Aorta (tissue), 5 donors: ENCODE measurements at regions of chr19 and their contacts with region 1.

Region 1: DNA sequence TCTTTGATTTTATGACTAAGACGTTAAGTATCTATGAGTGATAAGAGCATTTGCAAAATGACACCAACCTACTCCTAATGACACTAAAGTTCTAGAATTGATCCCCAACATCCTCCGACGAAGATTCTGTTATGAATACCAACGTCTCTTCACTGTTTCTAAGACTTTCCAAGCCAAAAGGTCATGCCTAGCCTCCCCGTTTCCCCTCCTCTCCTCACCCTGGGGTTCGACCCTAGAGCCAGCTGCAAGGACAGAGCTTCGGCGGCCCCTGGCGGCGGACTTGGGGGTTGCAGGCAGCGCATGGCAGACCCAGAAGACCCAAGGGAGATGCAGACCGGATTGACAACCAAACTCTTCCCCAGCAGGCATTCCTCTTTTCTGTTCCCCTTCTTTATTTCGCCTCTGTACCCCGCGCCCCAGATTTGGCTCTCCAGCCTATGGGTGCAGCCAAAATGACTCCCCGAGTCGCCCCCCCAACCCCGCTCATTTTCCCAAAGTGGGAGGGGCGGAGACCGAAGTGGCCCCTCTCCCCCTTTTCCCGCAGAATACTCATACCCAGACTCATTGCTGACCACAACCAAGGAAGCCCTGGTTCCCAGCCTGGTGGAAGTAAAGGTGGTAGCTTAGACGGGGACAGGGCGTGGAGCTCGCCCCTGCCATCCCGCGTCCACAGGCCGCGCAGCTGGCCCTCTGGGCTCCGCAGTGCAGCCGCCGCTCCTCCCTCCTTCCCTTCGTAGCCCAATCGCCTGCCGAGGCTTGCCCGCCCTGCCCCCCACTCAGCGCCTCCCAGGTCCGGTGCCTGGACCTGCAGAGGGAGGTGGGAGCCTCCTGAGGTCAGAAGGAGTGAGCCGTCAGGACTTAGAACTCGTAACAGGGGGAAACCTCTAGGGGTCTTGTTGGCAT is 4.1 kb upstream of the EML2 start:
- DNase-seq: peak; percentile 90 to 93
- ATAC-seq: peak; percentile 82
- H3K4me3 ChIP-seq: no peak overlapping the region
- H3K27ac ChIP-seq: no peak overlapping the region
- H3K4me1 ChIP-seq: peaks cover 0 to under 1% of the 10 kb centered on the region in 2 donors
- H3K27me3 ChIP-seq: no peaks in the 10 kb centered on the region

Region 2: GRCh38 chr19:45506246-45506990 is 136.9 kb before region 1 on chr19:
- intact Hi-C with region 1: loop called in 1 of 2 experiments (anchors 5 kb)
- DNase-seq: peak; percentile 97 to 99
- ATAC-seq: peak; percentile 90
- H3K4me3 ChIP-seq: peak overlapping the region; percentile 80 to 99
- H3K27ac ChIP-seq: peak overlapping the region in 1 of 2 donors; percentile 30
- H3K4me1 ChIP-seq: no peaks in the 10 kb centered on the region
- H3K27me3 ChIP-seq: no peaks in the 10 kb centered on the region

Region 3: GRCh38 chr19:45523642-45524256 is 119.5 kb before region 1 on chr19:
- intact Hi-C with region 1: loop called (anchors 2 kb)
- DNase-seq: peak; percentile 81 to 86
- ATAC-seq: peak; percentile 94
- H3K4me3 ChIP-seq: no peak overlapping the region
- H3K27ac ChIP-seq: no peak overlapping the region
- H3K4me1 ChIP-seq: no peaks in the 10 kb centered on the region
- H3K27me3 ChIP-seq: no peaks in the 10 kb centered on the region

Region 4: DNA sequence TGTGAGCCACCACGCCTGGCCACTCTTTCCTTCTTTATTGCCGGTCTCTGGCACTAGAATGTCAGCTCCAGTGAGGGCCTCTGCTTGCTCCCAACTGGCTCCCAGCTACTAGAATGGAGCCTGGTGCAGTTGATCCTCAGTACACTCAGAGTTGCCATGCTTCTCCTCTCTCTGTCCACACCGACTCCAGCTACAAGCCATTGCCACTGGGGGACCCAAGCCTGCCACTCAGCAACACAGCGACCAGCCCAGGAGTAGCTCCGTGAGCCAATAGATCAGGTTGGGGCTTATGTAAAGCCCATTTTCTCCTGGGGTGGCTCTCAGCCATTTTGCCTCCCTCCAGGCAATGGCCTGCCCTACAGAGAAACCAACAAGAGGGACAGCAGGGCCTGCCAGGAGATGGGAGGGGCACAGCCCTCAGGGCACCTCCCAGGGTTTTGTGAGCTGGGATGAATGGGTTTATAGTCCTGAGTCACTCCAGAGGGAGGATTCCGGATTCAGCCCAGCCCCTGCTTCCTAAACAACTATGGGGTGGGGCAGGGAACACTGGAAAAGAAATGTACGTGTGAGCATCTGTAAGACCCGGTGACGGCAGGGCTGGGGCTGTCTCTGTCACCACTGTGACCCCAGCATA is 95.2 kb before region 1 on chr19:
- intact Hi-C with region 1: no loop called
- DNase-seq: no peak
- ATAC-seq: no peak
- H3K4me3 ChIP-seq: no peak overlapping the region
- H3K27ac ChIP-seq: no peak overlapping the region
- H3K4me1 ChIP-seq: no peaks in the 10 kb centered on the region
- H3K27me3 ChIP-seq: no peaks in the 10 kb centered on the region

Region 5: GRCh38 chr19:45607071-45608029 is 35.9 kb before region 1 on chr19:
- intact Hi-C with region 1: loop called (anchors 1 to 2 kb)
- DNase-seq: peak; percentile 82 to 91
- ATAC-seq: peak; percentile 91
- H3K4me3 ChIP-seq: no peak overlapping the region
- H3K27ac ChIP-seq: no peak overlapping the region
- H3K4me1 ChIP-seq: no peaks in the 10 kb centered on the region
- H3K27me3 ChIP-seq: no peaks in the 10 kb centered on the region

Region 6: DNA sequence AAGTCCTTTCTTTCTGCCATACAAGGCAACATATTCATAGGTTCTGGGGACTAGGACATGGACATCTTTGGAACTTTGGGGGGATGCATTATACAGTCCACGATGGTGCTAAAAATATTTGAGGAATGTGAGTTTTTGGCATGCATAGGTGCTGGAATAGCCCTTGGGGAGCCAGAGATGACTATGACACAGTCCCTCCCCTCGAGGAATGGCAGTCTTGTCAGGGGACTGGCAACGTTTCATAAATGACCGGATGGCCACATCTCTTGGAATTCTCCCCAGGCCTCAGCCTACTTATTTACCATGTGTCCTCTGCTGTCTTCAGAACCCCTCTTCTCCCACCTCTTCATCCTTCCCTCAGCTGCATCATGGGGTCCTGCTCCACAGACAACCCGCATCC is 103.6 kb after region 1 on chr19:
- intact Hi-C with region 1: no loop called
- DNase-seq: no peak
- ATAC-seq: no peak
- H3K4me3 ChIP-seq: no peak overlapping the region
- H3K27ac ChIP-seq: no peak overlapping the region
- H3K4me1 ChIP-seq: no peaks in the 10 kb centered on the region
- H3K27me3 ChIP-seq: no peaks in the 10 kb centered on the region